ENCODE measurements at regions of chr7 and their contacts with region 1.

Region 1: DNA sequence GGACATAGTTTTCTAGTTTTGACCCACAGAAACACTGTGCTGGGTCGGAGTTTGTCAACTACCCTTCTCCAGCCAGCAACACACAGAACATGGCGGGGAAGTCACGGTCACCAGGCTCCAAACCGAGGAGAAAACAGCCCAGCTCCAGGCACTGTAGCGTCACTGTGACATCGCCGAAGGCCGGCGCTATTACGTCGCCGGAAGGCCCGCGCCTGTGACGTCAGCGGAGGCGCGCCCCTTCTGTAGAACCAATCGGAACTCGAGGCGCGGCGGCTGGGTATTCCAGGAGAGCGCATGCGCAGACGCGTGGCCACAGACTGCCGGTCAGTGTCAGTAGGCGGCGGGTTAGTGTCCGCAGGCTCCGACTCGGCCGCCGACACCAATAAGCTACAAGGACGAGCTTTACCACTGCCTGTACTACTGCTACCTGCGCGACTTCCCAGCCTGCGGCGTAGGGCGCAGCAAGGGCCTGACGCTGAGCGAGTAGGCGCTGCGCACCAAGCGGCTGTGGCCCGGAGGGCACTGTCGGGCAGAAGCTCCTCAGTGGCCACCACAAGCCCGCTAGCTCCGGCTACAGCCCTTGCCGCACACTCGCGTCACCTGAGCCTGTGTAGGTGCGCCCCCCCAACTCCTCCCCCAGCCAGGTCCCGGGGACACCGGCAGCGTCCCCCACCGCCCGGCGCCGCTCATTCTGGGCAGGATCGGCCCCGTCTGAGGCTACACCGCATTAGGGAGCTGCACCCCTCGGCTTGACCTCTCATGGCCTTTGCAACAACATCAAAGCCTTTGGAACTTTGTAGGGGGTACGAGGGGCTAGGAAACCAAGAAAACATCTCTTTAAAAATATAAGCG is 35.1 kb upstream of the SRRM3 start:
- DNase-seq: peak; percentile 91
- ATAC-seq: peak; percentile 97
- H3K4me3 ChIP-seq: peak overlapping the region; percentile 66 to 82 (median 72); a peak in 5 of 6 replicates
- H3K27ac ChIP-seq: peak overlapping the region; percentile 75
- H3K4me1 ChIP-seq: peaks cover 24% of the 10 kb centered on the region
- H3K27me3 ChIP-seq: no peaks in the 10 kb centered on the region
- CTCF ChIP-seq: peak; percentile 66
- EP300 ChIP-seq: 0 out of 4 replicates have a peak, but pooled peaks of 1 of the 2 experiments have one; percentile 12
- POLR2A ChIP-seq: peak; percentile 81 to 85
- RAD21 ChIP-seq: 0 out of 2 replicates have a peak, but pooled peaks have one; percentile 20

Region 2: DNA sequence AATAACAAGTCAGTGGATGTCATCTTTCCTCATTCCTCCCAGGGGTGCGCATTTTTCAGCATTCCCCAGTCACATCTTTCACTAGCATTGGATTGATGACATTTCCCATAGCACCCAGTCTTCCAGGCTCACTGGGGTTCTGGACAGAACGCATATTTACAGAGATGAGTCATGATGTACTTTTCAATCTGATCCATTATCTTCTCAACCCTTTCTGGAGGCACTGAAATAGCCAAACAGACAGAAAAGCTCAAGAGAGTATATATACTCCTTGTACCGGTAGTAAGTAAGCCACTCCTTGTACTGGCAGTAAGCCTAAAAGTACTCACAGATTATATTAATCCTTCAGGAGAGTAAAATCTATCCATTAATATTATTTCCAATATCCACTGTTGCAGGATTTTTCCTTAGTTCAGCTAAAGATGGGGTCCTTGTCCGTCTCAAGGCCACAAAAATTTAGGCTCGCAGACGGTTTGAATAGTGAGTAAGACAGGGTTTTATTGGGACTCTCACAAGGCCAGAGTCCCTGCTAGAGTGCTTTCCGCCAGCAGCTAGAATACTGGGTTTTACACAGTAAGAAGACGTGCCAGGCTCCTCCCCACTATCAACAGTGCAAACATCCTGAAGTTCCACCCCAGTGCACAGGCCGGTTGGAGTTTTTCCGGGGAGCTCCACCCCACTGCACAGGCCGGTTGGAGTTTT is 57.9 kb before region 1 on chr7:
- CTCF ChIA-PET with region 1: no interaction called
- POLR2A ChIA-PET with region 1: interaction called, 12 read pairs
- in situ Hi-C with region 1: no loop called
- intact Hi-C with region 1: no loop called
- DNase-seq: peak; percentile 80
- ATAC-seq: peak; percentile 93
- H3K4me3 ChIP-seq: peak overlapping the region; percentile 70 to 95 (median 75)
- H3K27ac ChIP-seq: peak overlapping the region; percentile 75
- H3K4me1 ChIP-seq: peaks cover 52% of the 10 kb centered on the region
- H3K27me3 ChIP-seq: no peaks in the 10 kb centered on the region; a peak in 1 of 5 replicates
- CTCF ChIP-seq: no peak
- EP300 ChIP-seq: peak in 1 of 2 experiments; percentile 52; a peak in 2 of 4 replicates
- POLR2A ChIP-seq: peak; percentile 79 to 80
- RAD21 ChIP-seq: no peak

Region 3: GRCh38 chr7:76155938-76156337 is 10.7 kb before region 1 on chr7:
- CTCF ChIA-PET with region 1: no interaction called
- POLR2A ChIA-PET with region 1: interaction called, 10 read pairs
- in situ Hi-C with region 1: no loop called
- intact Hi-C with region 1: no loop called
- DNase-seq: peak; percentile 49
- ATAC-seq: peak; percentile 50; the same call in 2 of the 3 replicates
- H3K4me3 ChIP-seq: no peak overlapping the region
- H3K27ac ChIP-seq: no peak overlapping the region
- H3K4me1 ChIP-seq: no peaks in the 10 kb centered on the region
- H3K27me3 ChIP-seq: no peaks in the 10 kb centered on the region
- CTCF ChIP-seq: no peak
- EP300 ChIP-seq: no peak
- POLR2A ChIP-seq: no peak
- RAD21 ChIP-seq: no peak

Region 4: DNA sequence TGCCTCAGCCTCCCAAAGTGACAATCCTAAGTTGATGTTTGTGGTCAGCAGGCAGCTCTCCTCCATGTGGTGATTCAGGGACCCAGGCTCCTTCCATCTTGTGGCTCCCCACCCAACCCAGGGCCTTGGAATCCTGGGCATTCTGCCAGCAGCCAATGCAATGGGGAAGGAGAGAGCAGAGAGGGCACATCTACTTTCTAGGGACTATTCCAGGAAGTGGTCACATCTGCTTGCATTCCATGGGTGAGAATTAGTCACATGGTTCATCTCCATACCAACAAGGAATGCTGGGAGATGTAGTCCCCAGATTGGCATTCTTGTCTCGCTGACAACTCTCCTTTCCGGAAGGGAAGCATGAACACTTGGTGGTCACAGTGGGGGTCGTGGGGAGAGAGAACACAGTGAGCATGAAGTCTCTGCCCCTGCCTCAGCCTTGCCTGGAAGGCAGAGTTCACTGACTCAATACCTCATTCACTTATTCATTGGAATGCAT is 25.2 kb after region 1 on chr7:
- CTCF ChIA-PET with region 1: no interaction called
- POLR2A ChIA-PET with region 1: no interaction called
- in situ Hi-C with region 1: no loop called
- intact Hi-C with region 1: no loop called
- DNase-seq: peak; percentile 46
- ATAC-seq: peak; percentile 77
- H3K4me3 ChIP-seq: no peak overlapping the region
- H3K27ac ChIP-seq: no peak overlapping the region
- H3K4me1 ChIP-seq: no peaks in the 10 kb centered on the region
- H3K27me3 ChIP-seq: peaks cover 0 to 4% of the 10 kb centered on the region in 2 experiments; a peak in 2 of 5 replicates
- CTCF ChIP-seq: no peak
- EP300 ChIP-seq: no peak
- POLR2A ChIP-seq: no peak
- RAD21 ChIP-seq: no peak

Region 5: DNA sequence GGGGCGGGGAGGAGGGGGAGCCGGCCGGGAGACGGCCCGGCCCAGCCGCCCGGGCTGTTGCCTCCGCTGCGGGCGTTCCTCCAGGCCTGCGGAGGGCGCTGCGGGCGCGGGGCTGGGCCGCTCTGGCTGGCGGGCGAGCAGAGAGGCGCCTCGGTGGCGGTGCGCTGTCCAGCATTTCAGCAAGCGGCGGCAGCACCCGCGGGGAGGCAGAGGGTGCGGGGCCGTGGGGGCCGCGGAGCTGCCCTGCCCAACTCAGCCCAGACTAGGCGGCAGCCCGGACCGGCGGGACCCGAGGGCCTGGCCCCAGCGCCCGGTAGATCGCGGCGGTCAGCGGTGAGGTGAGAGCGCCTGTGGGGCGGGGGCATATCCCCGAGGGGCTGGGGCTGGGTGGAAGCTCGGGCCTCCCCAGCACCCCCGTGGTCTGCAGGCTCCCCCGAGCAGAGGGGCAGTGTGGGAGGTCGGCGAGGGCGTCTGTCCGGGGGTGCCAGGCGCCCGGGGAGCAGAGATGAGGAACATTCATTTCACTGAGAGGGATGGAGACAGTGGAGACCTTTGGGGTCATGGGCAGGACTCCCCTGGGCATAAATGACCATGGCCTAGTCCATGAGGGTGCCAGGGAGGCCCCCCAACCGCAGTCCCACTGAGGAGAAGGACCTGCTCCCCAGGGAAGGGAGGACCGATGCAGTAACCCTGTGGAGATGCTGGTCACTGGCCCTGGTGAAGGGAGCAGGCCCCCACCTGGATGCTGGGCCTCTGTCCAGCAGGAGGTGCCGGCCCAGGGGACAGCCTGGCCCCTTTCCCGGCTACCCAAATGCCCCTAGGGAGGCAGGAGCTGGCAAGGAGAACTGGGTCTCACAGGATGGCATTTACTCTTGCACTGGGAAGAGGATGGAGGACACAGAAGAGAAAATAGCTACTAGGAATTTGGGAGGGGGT is 35.4 kb after region 1 on chr7 and contains the start of gene SRRM3:
- CTCF ChIA-PET with region 1: no interaction called
- POLR2A ChIA-PET with region 1: no interaction called
- in situ Hi-C with region 1: no loop called
- intact Hi-C with region 1: no loop called
- DNase-seq: peak; percentile 63
- ATAC-seq: peak; percentile 90
- H3K4me3 ChIP-seq: peak within 1 kb of the TSS; percentile 21 to 55 (median 41); a peak in 4 of 6 replicates
- H3K27ac ChIP-seq: no peak within 1 kb of the TSS
- H3K4me1 ChIP-seq: peaks cover 12% of the 10 kb centered on the region
- H3K27me3 ChIP-seq: no peaks in the 10 kb centered on the region; a peak in 1 of 5 replicates
- CTCF ChIP-seq: peak; percentile 81
- EP300 ChIP-seq: peak in 1 of 2 experiments; percentile 33; a peak in 1 of 4 replicates
- POLR2A ChIP-seq: no peak
- RAD21 ChIP-seq: peak; percentile 88
- total RNA-seq, gene SRRM3: 0.11 and 0.13 TPM in 2 replicates